ENCODE measurements at regions of chr10 and their contacts with region 1.

Region 1: DNA sequence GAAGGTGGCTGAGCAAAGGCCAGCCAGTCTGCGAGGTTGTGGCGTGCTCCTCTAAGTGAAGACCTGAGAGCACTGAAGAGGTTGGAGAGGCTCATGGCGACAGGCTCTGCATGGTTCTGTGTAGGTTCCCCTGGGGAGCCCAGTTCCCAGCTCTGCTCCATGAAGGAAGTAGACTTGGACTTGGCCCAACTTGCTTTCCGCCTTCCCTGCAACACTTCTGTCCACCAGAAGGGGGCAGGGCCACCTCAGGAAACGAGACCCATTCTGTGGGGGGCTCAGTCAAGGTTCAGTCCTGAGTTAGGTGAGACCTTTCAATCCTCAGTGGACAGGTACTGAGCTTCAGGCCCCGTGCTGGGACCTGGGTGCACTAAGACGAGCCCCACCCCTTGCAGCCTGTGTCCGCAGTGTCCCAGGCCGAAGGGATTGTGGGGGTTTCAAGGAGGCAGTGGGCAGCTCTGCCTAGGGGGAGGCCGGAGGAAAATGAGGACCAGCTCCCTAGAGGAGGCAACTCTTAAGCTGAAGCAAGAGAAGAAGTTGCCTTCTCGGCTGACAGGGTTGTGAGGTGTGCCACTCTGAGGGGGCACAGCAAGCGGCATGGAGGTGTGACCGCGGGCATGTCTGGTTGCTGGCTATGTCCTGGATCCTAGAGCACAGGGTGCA is 15.0 kb upstream of the PCBD1 start:
- DNase-seq: no peak
- H3K4me3 ChIP-seq: no peak overlapping the region
- H3K27me3 ChIP-seq: peaks cover 2% of the 10 kb centered on the region; the same call in 1 of the 2 replicates
- CTCF ChIP-seq: peak; percentile 93

Region 2: GRCh38 chr10:70575874-70576802 is 327.3 kb before region 1 on chr10:
- CTCF ChIA-PET with region 1: no interaction called
- POLR2A ChIA-PET with region 1: no interaction called
- DNase-seq: no peak
- H3K4me3 ChIP-seq: no peak overlapping the region
- H3K27me3 ChIP-seq: peaks cover 4% of the 10 kb centered on the region; the same call in 1 of the 2 replicates
- CTCF ChIP-seq: no peak

Region 3: GRCh38 chr10:70887804-70888800 is 15.3 kb before region 1 on chr10 and contains the start of gene PCBD1:
- CTCF ChIA-PET with region 1: interaction called, 23 read pairs
- POLR2A ChIA-PET with region 1: no interaction called
- DNase-seq: no peak
- H3K4me3 ChIP-seq: peak within 1 kb of the TSS; percentile 74
- H3K27me3 ChIP-seq: no peaks in the 10 kb centered on the region
- CTCF ChIP-seq: no peak
- polyA plus RNA-seq, gene PCBD1: 63.7 and 69.6 TPM in 2 replicates

Region 4: DNA sequence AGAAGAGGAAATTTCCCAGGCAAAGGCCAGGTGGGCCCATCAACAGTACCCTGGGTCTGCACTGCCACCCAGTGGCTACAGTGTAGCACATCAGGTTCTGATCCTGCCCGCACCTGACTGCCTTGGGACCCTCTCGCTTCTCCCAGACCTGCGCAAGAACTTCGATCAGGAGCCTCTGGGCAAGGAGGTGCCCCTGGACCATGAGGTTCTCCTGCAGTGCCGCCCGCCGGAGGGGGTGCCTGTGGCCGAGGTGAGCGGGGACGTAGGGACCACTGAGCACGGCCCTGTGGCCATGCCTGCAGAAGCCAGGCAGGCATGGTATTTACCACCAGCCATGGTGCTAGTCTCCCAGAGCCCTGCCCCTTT is 381.8 kb after region 1 on chr10:
- CTCF ChIA-PET with region 1: interaction called, 20 read pairs
- POLR2A ChIA-PET with region 1: no interaction called
- DNase-seq: no peak
- H3K4me3 ChIP-seq: no peak overlapping the region
- H3K27me3 ChIP-seq: no peaks in the 10 kb centered on the region
- CTCF ChIP-seq: peak; percentile 67

Measured in BJ (cell line).